GM10248 (cell line): ENCODE measurements at regions of chr11 and their contacts with region 1.

Region 1: GRCh38 chr11:44957776-44958564 is 7.3 kb upstream of the TP53I11 start:
- DNase-seq: no peak
- CTCF ChIP-seq: no peak

Region 2: GRCh38 chr11:44979543-44980399 is 21.8 kb after region 1 on chr11:
- CTCF ChIA-PET with region 1: interaction called, 3 read pairs
- POLR2A ChIA-PET with region 1: interaction called, 14 read pairs
- DNase-seq: no peak
- CTCF ChIP-seq: no peak